PC-3 (cell line): ENCODE measurements at regions of chr2 and their contacts with region 1.

Region 1: GRCh38 chr2:117814417-117815264 is at the start of gene DDX18:
- DNase-seq: peak; percentile 98
- ATAC-seq: peak; percentile 93
- H3K4me3 ChIP-seq: peak within 1 kb of the TSS; percentile 94
- H3K27ac ChIP-seq: peak within 1 kb of the TSS; percentile 68
- H3K4me1 ChIP-seq: peaks cover 19% of the 10 kb centered on the region
- H3K27me3 ChIP-seq: no peaks in the 10 kb centered on the region
- CTCF ChIP-seq: peak; percentile 99
- total RNA-seq, gene DDX18: 40.3 and 42.8 TPM in 2 replicates

Region 2: DNA sequence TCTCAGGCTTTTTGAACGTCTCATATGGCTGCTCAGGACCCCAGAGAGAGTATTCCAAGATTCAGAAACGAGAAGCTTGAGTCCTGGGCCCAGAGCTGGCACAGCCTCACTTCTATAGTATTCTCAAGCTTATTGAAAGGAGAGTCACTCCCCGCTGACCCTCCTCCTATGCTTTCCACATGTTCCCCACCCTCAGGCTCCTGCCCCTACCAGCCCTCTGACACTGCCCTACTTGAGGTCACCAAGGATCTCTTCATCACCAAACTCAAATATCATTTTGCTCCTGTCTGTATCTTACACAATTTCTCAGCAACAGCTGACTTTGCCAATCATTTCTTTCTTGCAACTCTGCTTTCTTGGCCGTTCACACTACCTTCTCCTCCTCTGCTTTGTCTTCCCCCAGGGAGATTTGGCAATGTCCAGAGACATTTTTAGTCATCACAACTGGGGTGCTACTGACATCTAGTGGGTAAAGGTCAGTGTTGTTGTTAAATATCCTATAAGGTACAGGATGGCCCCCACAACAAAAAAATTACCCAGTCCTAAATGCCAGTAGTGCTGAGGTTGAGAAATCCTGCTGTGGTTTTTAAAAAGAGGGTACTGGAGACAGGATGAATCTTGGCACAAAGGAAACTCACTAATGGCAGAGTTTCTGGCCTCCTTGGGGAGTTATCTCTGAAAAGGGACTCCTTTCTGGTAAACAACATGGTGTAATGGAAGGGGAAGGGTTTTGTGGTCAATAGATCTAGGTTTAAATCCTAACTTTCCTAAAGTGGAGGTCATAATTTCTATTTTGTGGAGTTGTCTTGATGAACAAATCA is 246.7 kb after region 1 on chr2:
- CTCF ChIA-PET with region 1: no interaction called
- POLR2A ChIA-PET with region 1: no interaction called
- intact Hi-C with region 1: loop called (anchors 2 kb)
- DNase-seq: peak; percentile 78
- ATAC-seq: peak; percentile 76
- H3K4me3 ChIP-seq: no peak overlapping the region
- H3K27ac ChIP-seq: no peak overlapping the region
- H3K4me1 ChIP-seq: peaks cover 18% of the 10 kb centered on the region; the same call in 1 of the 2 replicates
- H3K27me3 ChIP-seq: no peaks in the 10 kb centered on the region
- CTCF ChIP-seq: peak; percentile 73